ENCODE measurements at regions of chr16 and their contacts with region 1.

Region 1: GRCh38 chr16:24499193-24499814 is 40.1 kb upstream of the RBBP6 start:
- DNase-seq: peak; percentile 76

Region 2: GRCh38 chr16:24367186-24367710 is 132.1 kb before region 1 on chr16:
- in situ Hi-C with region 1: loop called (anchors 25 kb)
- DNase-seq: no peak